A673 (cell line): ENCODE measurements at regions of chr1 and their contacts with region 1.

Region 1: GRCh38 chr1:37859507-37860345 is at the start of gene MTF1:
- DNase-seq: peak; percentile 99
- H3K4me3 ChIP-seq: peak within 1 kb of the TSS; percentile 90
- H3K27ac ChIP-seq: peak within 1 kb of the TSS; percentile 90
- H3K4me1 ChIP-seq: peaks cover 10% of the 10 kb centered on the region
- H3K27me3 ChIP-seq: no peaks in the 10 kb centered on the region
- CTCF ChIP-seq: peak; percentile 92
- total RNA-seq, gene MTF1: 18.9 and 19.8 TPM in 2 replicates

Region 2: GRCh38 chr1:37721565-37721964 is 138.2 kb before region 1 on chr1:
- CTCF ChIA-PET with region 1: no interaction called
- POLR2A ChIA-PET with region 1: no interaction called
- intact Hi-C with region 1: no loop called
- DNase-seq: no peak
- H3K4me3 ChIP-seq: no peak overlapping the region
- H3K27ac ChIP-seq: no peak overlapping the region
- H3K4me1 ChIP-seq: no peaks in the 10 kb centered on the region
- H3K27me3 ChIP-seq: peaks cover 19% of the 10 kb centered on the region
- CTCF ChIP-seq: no peak

Region 3: DNA sequence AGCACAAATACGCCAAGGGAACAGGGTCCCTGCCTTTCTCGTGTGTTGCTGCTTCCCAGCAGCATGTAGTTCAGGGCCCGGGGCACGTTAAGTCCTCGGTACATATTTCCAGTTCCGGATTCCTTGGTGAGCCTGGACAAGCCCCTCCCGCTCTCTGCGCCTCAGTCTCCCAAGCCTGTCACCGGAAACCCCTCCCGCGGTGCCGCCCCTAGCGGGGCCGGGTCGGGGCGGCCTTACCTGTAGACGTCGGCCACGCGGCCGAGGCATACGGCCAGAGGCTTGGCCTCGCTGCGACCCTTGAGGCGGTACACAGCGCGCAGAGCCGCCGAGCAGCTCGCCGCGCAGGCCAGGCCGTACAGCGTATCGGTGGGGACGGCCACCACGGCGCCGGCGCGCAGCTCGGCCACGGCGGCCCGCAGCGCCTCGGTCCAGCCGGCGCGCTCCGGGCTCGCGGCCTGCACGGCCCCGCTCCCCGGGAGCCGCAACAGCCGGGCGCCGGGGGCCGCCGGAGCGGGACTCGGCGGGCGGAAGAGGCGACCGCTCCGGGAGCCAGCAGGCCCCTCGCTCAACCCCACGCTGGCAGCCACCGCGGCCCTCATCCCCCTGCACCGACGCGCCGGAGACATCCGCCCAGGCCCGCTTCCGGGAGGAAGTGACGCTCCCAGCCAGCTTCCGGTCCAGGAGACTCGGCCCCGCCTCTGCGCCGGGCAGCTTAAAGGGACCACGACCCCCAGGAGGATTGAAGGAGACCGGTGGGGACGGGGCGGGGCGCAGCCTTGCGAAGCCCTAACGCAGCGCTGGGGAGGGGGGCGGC is 52.0 kb before region 1 on chr1 and contains the starts of genes C1orf122 and YRDC:
- CTCF ChIA-PET with region 1: interaction called, 10 read pairs
- POLR2A ChIA-PET with region 1: interaction called, 9 read pairs
- intact Hi-C with region 1: loop called (anchors 5 kb)
- DNase-seq: peak; percentile 98
- H3K4me3 ChIP-seq: peak within 1 kb of the TSS; percentile 80
- H3K27ac ChIP-seq: peak within 1 kb of the TSS; percentile 86
- H3K4me1 ChIP-seq: peaks cover 15% of the 10 kb centered on the region
- H3K27me3 ChIP-seq: no peaks in the 10 kb centered on the region
- CTCF ChIP-seq: no peak
- total RNA-seq, gene C1orf122: 31.0 and 33.5 TPM in 2 replicates
- total RNA-seq, gene YRDC: 30.4 and 38.5 TPM in 2 replicates

Region 4: DNA sequence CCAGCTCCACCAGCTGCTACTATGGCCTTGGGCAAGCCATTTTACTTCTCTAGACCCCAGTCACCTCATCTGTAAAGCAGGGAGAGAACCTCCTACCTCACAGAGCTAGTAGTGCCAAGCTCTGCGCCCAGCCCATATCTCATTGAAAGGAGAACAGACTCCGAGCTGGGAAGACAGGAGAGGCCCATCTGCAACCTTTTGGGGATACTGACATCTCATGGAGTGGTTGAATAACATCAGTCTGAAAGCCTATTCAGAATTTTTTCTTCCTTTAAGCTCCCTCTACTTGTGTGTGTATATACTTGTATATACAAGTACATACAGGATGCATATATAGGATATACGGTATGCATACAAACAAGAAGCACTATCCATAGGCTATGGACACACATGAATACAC is 466.4 kb after region 1 on chr1:
- CTCF ChIA-PET with region 1: no interaction called
- POLR2A ChIA-PET with region 1: no interaction called
- intact Hi-C with region 1: no loop called
- DNase-seq: peak; percentile 21
- H3K4me3 ChIP-seq: no peak overlapping the region
- H3K27ac ChIP-seq: no peak overlapping the region
- H3K4me1 ChIP-seq: no peaks in the 10 kb centered on the region
- H3K27me3 ChIP-seq: no peaks in the 10 kb centered on the region
- CTCF ChIP-seq: no peak

Region 5: GRCh38 chr1:39016604-39017171 is 1157.0 kb after region 1 on chr1:
- CTCF ChIA-PET with region 1: no interaction called
- POLR2A ChIA-PET with region 1: no interaction called
- intact Hi-C with region 1: no loop called
- DNase-seq: no peak
- H3K4me3 ChIP-seq: no peak overlapping the region
- H3K27ac ChIP-seq: no peak overlapping the region
- H3K4me1 ChIP-seq: no peaks in the 10 kb centered on the region
- H3K27me3 ChIP-seq: no peaks in the 10 kb centered on the region
- CTCF ChIP-seq: no peak